ENCODE measurements at regions of chr5 and their contacts with region 1.

Region 1: DNA sequence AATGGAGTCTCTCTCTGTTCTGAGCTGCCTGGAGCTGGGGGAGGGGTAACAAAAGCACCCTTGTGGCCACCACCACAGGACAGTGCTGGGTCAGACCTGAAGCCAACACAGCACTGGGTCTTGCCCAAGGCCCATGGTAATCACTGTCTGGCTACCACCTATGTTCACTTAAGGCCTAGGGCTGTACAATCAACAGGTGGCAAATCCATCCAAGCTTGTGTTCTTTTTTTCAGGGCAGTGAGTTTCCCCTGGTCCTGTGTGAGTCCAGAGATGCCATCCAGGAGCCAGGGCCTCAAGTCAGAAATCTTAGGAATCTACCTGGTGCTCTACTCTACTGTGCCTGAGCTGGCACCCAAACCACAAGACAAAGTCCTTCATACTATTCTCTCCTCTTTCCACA is 20.1 kb upstream of the OTP start:
- DNase-seq: no peak
- CTCF ChIP-seq: no peak

Region 2: DNA sequence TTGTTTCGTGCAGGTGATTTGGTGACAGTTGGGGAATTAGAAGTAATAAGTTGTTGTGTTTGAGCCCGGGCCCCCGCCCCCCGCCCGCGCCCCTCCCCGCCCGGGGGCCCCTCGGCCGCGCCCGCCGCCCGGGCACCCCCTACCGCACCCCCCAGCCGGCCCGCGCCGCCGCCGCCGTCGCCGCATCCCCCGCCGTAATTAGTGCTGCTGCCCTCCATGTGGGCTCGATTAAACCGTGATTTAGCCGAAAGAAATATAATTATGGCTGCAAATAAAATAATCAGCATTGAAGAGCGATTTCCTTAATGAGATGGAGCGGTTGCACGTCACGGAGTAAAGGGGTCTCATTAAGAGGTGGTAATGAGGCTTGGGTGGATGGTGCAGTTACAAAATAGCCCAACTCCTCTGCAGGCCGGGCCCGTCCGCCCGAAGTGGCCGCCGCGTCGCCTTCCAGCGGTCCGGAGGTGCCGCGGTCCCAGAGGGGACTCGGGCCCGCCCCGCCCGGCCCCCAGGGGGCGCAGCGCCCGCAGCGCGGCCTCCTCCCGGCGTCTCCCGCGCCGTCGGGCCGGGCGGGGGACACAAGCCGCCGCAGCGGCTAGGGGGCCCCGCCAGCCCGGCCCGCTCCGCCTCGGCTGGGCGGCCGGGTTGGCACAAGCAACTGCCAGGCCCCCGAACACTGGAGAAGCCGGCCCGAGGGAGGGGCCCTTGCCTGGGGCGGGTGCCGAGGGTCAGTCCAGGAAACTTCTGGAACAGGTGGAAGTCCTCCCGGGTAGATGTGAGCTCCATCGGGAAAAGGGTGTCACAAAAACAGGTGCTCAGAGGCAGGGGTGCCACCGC is 13.3 kb before region 1 on chr5:
- CTCF ChIA-PET with region 1: interaction called, 20 read pairs
- POLR2A ChIA-PET with region 1: no interaction called
- DNase-seq: peak; percentile 85
- CTCF ChIP-seq: peak; percentile 63

Region 3: DNA sequence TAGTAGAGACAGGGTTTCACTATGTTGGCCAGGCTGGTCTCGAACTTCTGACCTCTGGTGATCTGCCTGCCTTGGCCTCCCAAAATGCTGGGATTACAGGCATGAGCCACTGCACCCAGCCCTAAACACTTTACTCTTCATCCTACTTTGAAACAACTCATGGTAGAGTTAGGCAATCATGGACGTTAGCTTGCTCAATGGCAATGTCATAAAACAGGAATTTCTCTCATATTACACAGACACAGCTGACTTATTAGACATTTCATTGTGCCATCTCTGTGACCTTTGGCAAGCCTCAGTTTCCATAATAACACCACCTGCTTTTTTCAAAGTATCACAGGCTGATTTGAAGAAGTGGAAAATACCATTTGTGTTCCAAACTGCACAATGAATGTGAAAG is 21.1 kb after region 1 on chr5:
- CTCF ChIA-PET with region 1: no interaction called
- POLR2A ChIA-PET with region 1: no interaction called
- DNase-seq: no peak
- CTCF ChIP-seq: no peak